CD8-positive, alpha-beta T cell (primary cell): ENCODE measurements at regions of chr20 and their contacts with region 1.

Region 1: GRCh38 chr20:32902456-32903420 is 44.0 kb downstream of the EFCAB8 start:
- DNase-seq: peak; percentile 28 to 83 (median 71)
- ATAC-seq: peak; percentile 98
- H3K4me3 ChIP-seq: no peak overlapping the region
- H3K4me3 Mint-ChIP-seq: no peak overlapping the region
- H3K27ac ChIP-seq: no peak overlapping the region
- H3K27ac Mint-ChIP-seq: no peak overlapping the region
- H3K4me1 ChIP-seq: peaks cover 17% of the 10 kb centered on the region
- H3K4me1 Mint-ChIP-seq: peaks cover 22% of the 10 kb centered on the region
- H3K27me3 ChIP-seq: no peaks in the 10 kb centered on the region
- H3K27me3 Mint-ChIP-seq: no peaks in the 10 kb centered on the region
- CTCF ChIP-seq: peak; percentile 97

Region 2: DNA sequence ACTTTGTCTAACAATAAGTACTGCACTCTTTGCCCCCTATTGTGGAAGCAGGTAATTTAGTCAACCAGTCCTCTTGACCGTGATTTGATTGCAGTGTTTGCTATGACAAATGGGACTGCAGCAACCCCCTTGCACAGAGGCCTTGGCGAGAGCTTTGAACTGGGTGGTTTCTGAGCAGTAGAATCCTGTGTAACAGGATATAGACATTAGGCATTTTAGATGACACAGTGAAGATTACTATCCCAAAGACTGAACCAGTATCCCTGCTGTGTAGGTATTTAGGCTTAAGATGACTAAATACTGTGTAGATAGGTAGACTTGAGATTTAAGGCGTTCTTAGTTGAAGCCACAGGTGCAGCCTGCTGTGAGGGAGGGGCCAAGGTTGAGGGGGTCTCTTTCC is 130.7 kb before region 1 on chr20:
- CTCF ChIA-PET with region 1: no interaction called
- POLR2A ChIA-PET with region 1: no interaction called
- intact Hi-C with region 1: no loop called
- DNase-seq: no peak
- ATAC-seq: peak; percentile 33
- H3K4me3 ChIP-seq: no peak overlapping the region
- H3K4me3 Mint-ChIP-seq: peak overlapping the region; percentile 8
- H3K27ac ChIP-seq: no peak overlapping the region
- H3K27ac Mint-ChIP-seq: peak overlapping the region; percentile 72
- H3K4me1 ChIP-seq: peaks cover 19% of the 10 kb centered on the region
- H3K4me1 Mint-ChIP-seq: peaks cover 40% of the 10 kb centered on the region
- H3K27me3 ChIP-seq: no peaks in the 10 kb centered on the region
- H3K27me3 Mint-ChIP-seq: no peaks in the 10 kb centered on the region
- CTCF ChIP-seq: no peak

Region 3: GRCh38 chr20:32972181-32973076 is 69.7 kb after region 1 on chr20:
- CTCF ChIA-PET with region 1: interaction called, 3 read pairs
- POLR2A ChIA-PET with region 1: no interaction called
- intact Hi-C with region 1: loop called in 1 of 2 experiments (anchors 1 kb)
- DNase-seq: peak; percentile 66 to 97 (median 83)
- ATAC-seq: peak; percentile 69
- H3K4me3 ChIP-seq: peak overlapping the region; percentile 12 to 42
- H3K4me3 Mint-ChIP-seq: no peak overlapping the region
- H3K27ac ChIP-seq: peak overlapping the region; percentile 73 to 95
- H3K27ac Mint-ChIP-seq: no peak overlapping the region
- H3K4me1 ChIP-seq: peaks cover 87% of the 10 kb centered on the region
- H3K4me1 Mint-ChIP-seq: peaks cover 45% of the 10 kb centered on the region
- H3K27me3 ChIP-seq: no peaks in the 10 kb centered on the region
- H3K27me3 Mint-ChIP-seq: no peaks in the 10 kb centered on the region
- CTCF ChIP-seq: no peak

Region 4: DNA sequence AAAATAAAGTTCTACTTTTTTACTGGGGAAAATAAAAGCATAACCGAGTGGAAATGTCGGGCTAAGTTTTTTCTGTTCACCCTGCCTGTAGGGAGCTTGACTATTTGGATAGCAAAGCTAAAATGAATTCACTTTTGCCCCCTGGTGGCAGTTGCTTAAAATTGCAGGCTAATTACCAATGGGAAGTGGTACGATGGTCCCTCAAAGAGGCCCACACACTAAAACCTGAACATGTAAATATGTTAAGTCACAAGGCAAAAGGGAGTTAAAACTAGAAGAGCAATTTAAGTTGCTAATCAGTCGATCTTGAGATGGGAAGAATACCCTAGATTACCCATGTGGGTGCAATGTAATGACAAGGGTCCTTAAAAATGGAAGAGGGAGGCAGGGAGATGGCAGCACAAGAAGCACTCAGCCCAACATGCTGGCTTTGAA is 102.4 kb after region 1 on chr20:
- CTCF ChIA-PET with region 1: interaction called, 29 read pairs
- POLR2A ChIA-PET with region 1: no interaction called
- intact Hi-C with region 1: loop called (anchors 1 kb)
- DNase-seq: peak in 3 of 9 experiments; percentile 38 to 69 (median 58)
- ATAC-seq: no peak
- H3K4me3 ChIP-seq: no peak overlapping the region
- H3K4me3 Mint-ChIP-seq: no peak overlapping the region
- H3K27ac ChIP-seq: no peak overlapping the region
- H3K27ac Mint-ChIP-seq: no peak overlapping the region
- H3K4me1 ChIP-seq: peaks cover 11% of the 10 kb centered on the region
- H3K4me1 Mint-ChIP-seq: peaks cover 27% of the 10 kb centered on the region
- H3K27me3 ChIP-seq: no peaks in the 10 kb centered on the region
- H3K27me3 Mint-ChIP-seq: no peaks in the 10 kb centered on the region
- CTCF ChIP-seq: peak; percentile 64

Region 5: DNA sequence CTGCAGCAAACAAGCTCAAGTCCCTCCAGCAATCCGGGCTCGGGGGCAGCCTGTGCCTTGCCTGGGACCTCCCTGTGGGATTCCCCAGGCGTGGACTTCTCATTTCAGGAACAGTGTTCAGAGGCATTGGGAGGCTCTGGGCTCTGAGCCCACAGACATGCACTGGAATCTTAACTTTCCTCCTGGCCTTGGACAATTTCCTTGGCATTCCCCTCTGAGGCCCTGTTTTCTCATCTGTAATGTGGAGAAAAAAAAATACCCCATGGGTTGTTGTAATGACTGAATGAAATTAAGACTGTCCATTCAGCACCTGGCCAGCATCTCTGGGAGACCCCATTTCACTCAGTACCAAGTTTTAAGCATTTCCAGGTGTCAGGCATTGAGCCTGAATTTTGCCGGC is 194.3 kb after region 1 on chr20:
- CTCF ChIA-PET with region 1: interaction called, 39 read pairs
- POLR2A ChIA-PET with region 1: no interaction called
- intact Hi-C with region 1: loop called (anchors 1 kb)
- DNase-seq: no peak
- ATAC-seq: no peak
- H3K4me3 ChIP-seq: no peak overlapping the region
- H3K4me3 Mint-ChIP-seq: no peak overlapping the region
- H3K27ac ChIP-seq: no peak overlapping the region
- H3K27ac Mint-ChIP-seq: no peak overlapping the region
- H3K4me1 ChIP-seq: peaks cover 3% of the 10 kb centered on the region
- H3K4me1 Mint-ChIP-seq: peaks cover 3% of the 10 kb centered on the region
- H3K27me3 ChIP-seq: no peaks in the 10 kb centered on the region
- H3K27me3 Mint-ChIP-seq: no peaks in the 10 kb centered on the region
- CTCF ChIP-seq: no peak

Region 6: GRCh38 chr20:33291830-33292355 is 389.2 kb after region 1 on chr20:
- CTCF ChIA-PET with region 1: interaction called, 12 read pairs
- POLR2A ChIA-PET with region 1: no interaction called
- intact Hi-C with region 1: loop called in 1 of 2 experiments (anchors 1 kb)
- DNase-seq: peak; percentile 46 to 76 (median 66)
- ATAC-seq: peak; percentile 51
- H3K4me3 ChIP-seq: no peak overlapping the region
- H3K4me3 Mint-ChIP-seq: no peak overlapping the region
- H3K27ac ChIP-seq: no peak overlapping the region
- H3K27ac Mint-ChIP-seq: no peak overlapping the region
- H3K4me1 ChIP-seq: no peaks in the 10 kb centered on the region
- H3K4me1 Mint-ChIP-seq: no peaks in the 10 kb centered on the region
- H3K27me3 ChIP-seq: no peaks in the 10 kb centered on the region
- H3K27me3 Mint-ChIP-seq: peaks cover 9% of the 10 kb centered on the region
- CTCF ChIP-seq: peak; percentile 99